ENCODE measurements at regions of chr20 and their contacts with region 1.

Region 1: GRCh38 chr20:21548390-21549035 is 34.6 kb upstream of the NKX2-2 start:
- DNase-seq: peak; percentile 62
- H3K4me3 Mint-ChIP-seq: peak overlapping the region; percentile 48
- H3K27ac Mint-ChIP-seq: peak overlapping the region; percentile 78
- H3K4me1 Mint-ChIP-seq: peaks cover 32% of the 10 kb centered on the region
- H3K27me3 Mint-ChIP-seq: peaks cover 3% of the 10 kb centered on the region

Region 2: GRCh38 chr20:21509597-21510371 is 38.7 kb before region 1 on chr20:
- CTCF ChIA-PET with region 1: no interaction called
- POLR2A ChIA-PET with region 1: no interaction called
- DNase-seq: no peak
- H3K4me3 Mint-ChIP-seq: peak overlapping the region; percentile 65
- H3K27ac Mint-ChIP-seq: peak overlapping the region; percentile 3
- H3K4me1 Mint-ChIP-seq: peaks cover 45% of the 10 kb centered on the region
- H3K27me3 Mint-ChIP-seq: peaks cover 76% of the 10 kb centered on the region

Region 3: GRCh38 chr20:21559305-21559704 is 10.8 kb after region 1 on chr20:
- CTCF ChIA-PET with region 1: interaction called, 3 read pairs
- POLR2A ChIA-PET with region 1: interaction called, 20 read pairs
- DNase-seq: peak; percentile 40
- H3K4me3 Mint-ChIP-seq: peak overlapping the region; percentile 78
- H3K27ac Mint-ChIP-seq: peak overlapping the region; percentile 80
- H3K4me1 Mint-ChIP-seq: peaks cover 49% of the 10 kb centered on the region
- H3K27me3 Mint-ChIP-seq: peaks cover 8% of the 10 kb centered on the region

Region 4: DNA sequence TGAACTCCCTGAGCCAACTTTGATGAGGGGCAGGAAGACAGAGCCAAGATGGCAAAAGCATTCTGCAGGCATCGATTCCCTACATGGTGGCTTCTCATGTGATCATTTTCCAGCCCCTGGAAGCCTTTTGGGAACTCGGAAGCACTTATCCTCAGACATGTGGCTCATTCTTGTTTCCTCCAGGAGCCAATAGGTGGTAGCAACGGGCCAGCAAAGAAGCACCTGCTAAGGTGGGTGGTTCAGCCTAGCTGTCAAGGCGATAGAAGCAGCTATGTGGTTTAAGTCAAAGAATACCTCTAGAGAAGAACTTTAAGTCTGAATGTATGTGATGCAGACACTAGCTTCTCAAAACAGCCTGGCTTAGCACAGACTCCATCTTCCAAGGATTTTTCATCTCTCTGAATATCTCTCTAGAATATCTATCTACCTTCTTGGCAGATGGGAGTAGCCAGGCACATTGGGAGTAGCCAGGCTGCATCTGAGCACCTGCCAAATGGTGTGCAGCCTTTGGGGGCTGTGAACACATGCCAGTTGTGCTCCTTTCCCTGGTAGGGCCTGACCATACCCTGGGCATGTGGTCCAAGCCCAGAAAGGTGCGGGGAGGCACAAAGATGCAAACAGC is 92.2 kb after region 1 on chr20:
- CTCF ChIA-PET with region 1: no interaction called
- POLR2A ChIA-PET with region 1: no interaction called
- DNase-seq: no peak
- H3K4me3 Mint-ChIP-seq: no peak overlapping the region
- H3K27ac Mint-ChIP-seq: no peak overlapping the region
- H3K4me1 Mint-ChIP-seq: no peaks in the 10 kb centered on the region
- H3K27me3 Mint-ChIP-seq: no peaks in the 10 kb centered on the region

Measured in activated CD4-positive, alpha-beta memory T cell treated with anti-CD3 and anti-CD28 coated beads, Interleukin-2, amount 10 ng/mL, durations not matched to agents 7 days and 5 days (primary cell).